ENCODE measurements at regions of chr6 and their contacts with region 1.

Region 1: GRCh38 chr6:33061987-33062386 is 11.5 kb downstream of the HLA-DPA1 start:
- DNase-seq: peak; percentile 62
- ATAC-seq: peak; percentile 94
- H3K4me3 ChIP-seq: no peak overlapping the region
- H3K27ac ChIP-seq: peak overlapping the region; percentile 66
- H3K4me1 ChIP-seq: peaks cover 13% of the 10 kb centered on the region
- H3K27me3 ChIP-seq: no peaks in the 10 kb centered on the region
- CTCF ChIP-seq: no peak
- EP300 ChIP-seq: peak in 1 of 2 experiments; percentile 46; a peak in 1 of 4 replicates
- POLR2A ChIP-seq: no peak
- RAD21 ChIP-seq: no peak

Region 2: GRCh38 chr6:31513456-31514165 is 1548.4 kb before region 1 on chr6:
- CTCF ChIA-PET with region 1: no interaction called
- POLR2A ChIA-PET with region 1: no interaction called
- RAD21 ChIA-PET with region 1: no interaction called
- SMC1A ChIA-PET with region 1: no interaction called
- in situ Hi-C with region 1: no loop called
- intact Hi-C with region 1: no loop called
- DNase-seq: no peak
- ATAC-seq: no peak
- H3K4me3 ChIP-seq: no peak overlapping the region
- H3K27ac ChIP-seq: no peak overlapping the region
- H3K4me1 ChIP-seq: no peaks in the 10 kb centered on the region
- H3K27me3 ChIP-seq: no peaks in the 10 kb centered on the region
- CTCF ChIP-seq: no peak
- EP300 ChIP-seq: no peak
- POLR2A ChIP-seq: no peak
- RAD21 ChIP-seq: no peak

Region 3: DNA sequence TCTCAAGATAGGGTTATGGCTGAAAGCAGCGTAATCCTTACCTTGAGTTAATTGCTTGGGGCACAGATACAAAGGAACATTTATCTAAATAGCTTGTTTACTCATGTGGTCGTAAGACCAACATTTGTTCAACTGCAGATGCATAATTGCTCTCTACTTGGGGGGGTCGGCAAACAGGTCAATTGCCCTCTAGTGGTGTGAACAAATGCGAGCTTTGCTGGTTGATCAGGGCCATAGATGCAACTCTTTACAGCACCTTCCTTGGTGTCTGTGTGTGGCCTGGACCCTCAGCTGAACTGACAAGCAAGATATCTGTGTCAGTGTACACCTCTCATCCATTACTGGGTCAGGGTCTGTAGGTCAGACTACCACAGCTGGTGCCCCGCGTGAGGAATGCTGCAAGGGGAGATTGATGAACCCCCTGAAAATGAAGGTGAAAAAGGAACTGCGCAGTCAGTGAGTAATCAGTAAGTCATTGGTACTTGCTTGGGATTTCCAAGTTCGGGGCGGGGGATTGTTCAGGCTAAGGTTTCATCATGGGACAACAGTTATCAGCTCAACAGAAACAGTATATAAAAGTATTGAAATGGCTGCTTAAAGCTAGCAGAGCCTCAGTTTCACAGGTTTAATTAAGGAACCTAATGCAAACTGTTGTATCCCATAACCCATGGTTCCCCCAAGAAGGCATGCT is 12.5 kb before region 1 on chr6:
- CTCF ChIA-PET with region 1: interaction called, 19 read pairs
- POLR2A ChIA-PET with region 1: interaction called, 9 read pairs
- RAD21 ChIA-PET with region 1: interaction called, 6 read pairs
- SMC1A ChIA-PET with region 1: interaction called, 7 read pairs
- in situ Hi-C with region 1: no loop called
- intact Hi-C with region 1: no loop called
- DNase-seq: no peak
- ATAC-seq: peak; percentile 85
- H3K4me3 ChIP-seq: no peak overlapping the region
- H3K27ac ChIP-seq: no peak overlapping the region
- H3K4me1 ChIP-seq: no peaks in the 10 kb centered on the region
- H3K27me3 ChIP-seq: no peaks in the 10 kb centered on the region
- CTCF ChIP-seq: peak; percentile 23 to 54 (median 53)
- EP300 ChIP-seq: no peak
- POLR2A ChIP-seq: no peak
- RAD21 ChIP-seq: peak; percentile 43; the same call in 1 of the 2 replicates

Region 4: DNA sequence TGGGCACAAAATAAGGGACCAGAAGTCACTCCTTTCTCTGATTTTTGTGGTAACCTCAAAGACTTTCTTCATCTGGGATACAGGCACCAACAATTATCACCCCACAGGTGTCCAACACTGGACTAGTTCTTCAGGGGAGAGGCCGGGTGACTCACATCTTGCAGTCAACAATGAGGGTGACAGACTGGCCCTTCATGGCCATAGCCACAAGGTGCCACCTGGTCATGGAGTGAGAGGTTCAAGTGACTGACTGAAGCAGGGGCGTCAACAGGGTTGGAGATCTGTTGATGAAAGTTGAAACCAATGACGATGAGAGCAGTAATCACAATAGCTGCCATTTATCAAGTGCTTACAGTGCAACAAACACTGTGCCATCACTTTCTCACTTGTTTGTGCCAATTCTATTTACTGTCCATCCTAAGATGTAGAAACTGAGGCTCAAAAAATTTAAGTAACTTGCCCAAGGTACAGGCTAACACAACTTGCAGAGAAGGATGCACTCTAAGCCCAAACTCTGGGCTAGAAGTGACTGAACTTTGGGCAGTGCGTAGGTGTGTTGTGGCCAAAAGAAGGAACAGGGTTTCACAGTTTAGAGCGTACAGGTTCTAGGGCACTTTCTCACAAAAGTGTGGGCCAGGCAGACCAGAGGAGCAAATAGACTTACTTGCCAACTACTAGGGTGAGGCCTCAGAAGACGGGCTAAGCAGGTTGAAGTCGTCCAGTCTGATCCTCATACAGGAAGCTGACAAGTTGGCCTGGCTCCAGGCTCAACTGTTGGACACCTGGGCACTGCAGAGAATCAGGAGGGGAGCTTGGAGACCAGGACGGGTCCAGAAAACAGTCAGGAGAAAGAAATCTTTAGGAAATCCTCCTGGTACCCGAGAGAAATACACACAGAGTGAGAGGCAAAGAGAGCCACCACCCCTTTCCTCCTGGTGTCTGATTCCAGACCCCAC is 44.2 kb after region 1 on chr6:
- CTCF ChIA-PET with region 1: no interaction called
- POLR2A ChIA-PET with region 1: no interaction called
- RAD21 ChIA-PET with region 1: no interaction called
- SMC1A ChIA-PET with region 1: no interaction called
- in situ Hi-C with region 1: no loop called
- intact Hi-C with region 1: no loop called
- DNase-seq: no peak
- ATAC-seq: peak; percentile 59
- H3K4me3 ChIP-seq: no peak overlapping the region
- H3K27ac ChIP-seq: no peak overlapping the region
- H3K4me1 ChIP-seq: peaks cover 4% of the 10 kb centered on the region
- H3K27me3 ChIP-seq: no peaks in the 10 kb centered on the region; a peak in 1 of 4 replicates
- CTCF ChIP-seq: no peak
- EP300 ChIP-seq: no peak
- POLR2A ChIP-seq: no peak
- RAD21 ChIP-seq: no peak

Region 5: GRCh38 chr6:33132081-33132524 is 70.1 kb after region 1 on chr6:
- CTCF ChIA-PET with region 1: no interaction called
- POLR2A ChIA-PET with region 1: no interaction called
- RAD21 ChIA-PET with region 1: no interaction called
- SMC1A ChIA-PET with region 1: no interaction called
- in situ Hi-C with region 1: no loop called
- intact Hi-C with region 1: no loop called
- DNase-seq: no peak
- ATAC-seq: peak; percentile 35; the same call in 1 of the 3 replicates
- H3K4me3 ChIP-seq: no peak overlapping the region
- H3K27ac ChIP-seq: no peak overlapping the region
- H3K4me1 ChIP-seq: peaks cover 14% of the 10 kb centered on the region
- H3K27me3 ChIP-seq: no peaks in the 10 kb centered on the region
- CTCF ChIP-seq: no peak
- EP300 ChIP-seq: no peak
- POLR2A ChIP-seq: no peak
- RAD21 ChIP-seq: no peak

Region 6: GRCh38 chr6:33143113-33143770 is 81.3 kb after region 1 on chr6:
- CTCF ChIA-PET with region 1: no interaction called
- POLR2A ChIA-PET with region 1: no interaction called
- RAD21 ChIA-PET with region 1: no interaction called
- SMC1A ChIA-PET with region 1: no interaction called
- in situ Hi-C with region 1: no loop called
- intact Hi-C with region 1: no loop called
- DNase-seq: no peak
- ATAC-seq: no peak
- H3K4me3 ChIP-seq: no peak overlapping the region
- H3K27ac ChIP-seq: no peak overlapping the region
- H3K4me1 ChIP-seq: peaks cover 8% of the 10 kb centered on the region
- H3K27me3 ChIP-seq: no peaks in the 10 kb centered on the region
- CTCF ChIP-seq: peak in 2 of 3 experiments; percentile 15 to 32; a peak in 2 of 6 replicates
- EP300 ChIP-seq: no peak
- POLR2A ChIP-seq: no peak
- RAD21 ChIP-seq: no peak